ENCODE measurements at regions of chr11 and their contacts with region 1.

Region 1: GRCh38 chr11:121591405-121592033 is 138.8 kb upstream of the SORL1-AS1 start:
- DNase-seq: no peak
- ATAC-seq: peak; percentile 39
- H3K4me3 Mint-ChIP-seq: peak overlapping the region; percentile 49
- H3K27ac Mint-ChIP-seq: peak overlapping the region; percentile 93
- H3K4me1 Mint-ChIP-seq: peaks cover 36% of the 10 kb centered on the region
- H3K27me3 Mint-ChIP-seq: no peaks in the 10 kb centered on the region
- CTCF ChIP-seq: peak; percentile 77

Region 2: GRCh38 chr11:120929664-120930154 is 661.8 kb before region 1 on chr11:
- CTCF ChIA-PET with region 1: no interaction called
- POLR2A ChIA-PET with region 1: no interaction called
- intact Hi-C with region 1: loop called (anchors 10 kb)
- DNase-seq: no peak
- ATAC-seq: no peak
- H3K4me3 Mint-ChIP-seq: no peak overlapping the region
- H3K27ac Mint-ChIP-seq: no peak overlapping the region
- H3K4me1 Mint-ChIP-seq: peaks cover 16% of the 10 kb centered on the region
- H3K27me3 Mint-ChIP-seq: peaks cover 16% of the 10 kb centered on the region
- CTCF ChIP-seq: no peak

Region 3: GRCh38 chr11:121292495-121293287 is 298.8 kb before region 1 on chr11 and contains the start of gene SC5D:
- CTCF ChIA-PET with region 1: interaction called, 5 read pairs
- POLR2A ChIA-PET with region 1: interaction called, 9 read pairs
- intact Hi-C with region 1: loop called (anchors 1 kb)
- DNase-seq: peak; percentile 94
- ATAC-seq: peak; percentile 85
- H3K4me3 Mint-ChIP-seq: peak within 1 kb of the TSS; percentile 94
- H3K27ac Mint-ChIP-seq: peak within 1 kb of the TSS; percentile 97
- H3K4me1 Mint-ChIP-seq: peaks cover 50% of the 10 kb centered on the region
- H3K27me3 Mint-ChIP-seq: no peaks in the 10 kb centered on the region
- CTCF ChIP-seq: no peak
- total RNA-seq, gene SC5D: 35.2 and 40.4 TPM in 2 replicates

Region 4: GRCh38 chr11:121367001-121367843 is 224.3 kb before region 1 on chr11:
- CTCF ChIA-PET with region 1: interaction called, 3 read pairs
- POLR2A ChIA-PET with region 1: interaction called, 4 read pairs
- intact Hi-C with region 1: loop called (anchors 1 kb)
- DNase-seq: peak; percentile 22
- ATAC-seq: peak; percentile 98
- H3K4me3 Mint-ChIP-seq: peak overlapping the region; percentile 74
- H3K27ac Mint-ChIP-seq: peak overlapping the region; percentile 81
- H3K4me1 Mint-ChIP-seq: peaks cover 55% of the 10 kb centered on the region
- H3K27me3 Mint-ChIP-seq: no peaks in the 10 kb centered on the region
- CTCF ChIP-seq: no peak

Region 5: DNA sequence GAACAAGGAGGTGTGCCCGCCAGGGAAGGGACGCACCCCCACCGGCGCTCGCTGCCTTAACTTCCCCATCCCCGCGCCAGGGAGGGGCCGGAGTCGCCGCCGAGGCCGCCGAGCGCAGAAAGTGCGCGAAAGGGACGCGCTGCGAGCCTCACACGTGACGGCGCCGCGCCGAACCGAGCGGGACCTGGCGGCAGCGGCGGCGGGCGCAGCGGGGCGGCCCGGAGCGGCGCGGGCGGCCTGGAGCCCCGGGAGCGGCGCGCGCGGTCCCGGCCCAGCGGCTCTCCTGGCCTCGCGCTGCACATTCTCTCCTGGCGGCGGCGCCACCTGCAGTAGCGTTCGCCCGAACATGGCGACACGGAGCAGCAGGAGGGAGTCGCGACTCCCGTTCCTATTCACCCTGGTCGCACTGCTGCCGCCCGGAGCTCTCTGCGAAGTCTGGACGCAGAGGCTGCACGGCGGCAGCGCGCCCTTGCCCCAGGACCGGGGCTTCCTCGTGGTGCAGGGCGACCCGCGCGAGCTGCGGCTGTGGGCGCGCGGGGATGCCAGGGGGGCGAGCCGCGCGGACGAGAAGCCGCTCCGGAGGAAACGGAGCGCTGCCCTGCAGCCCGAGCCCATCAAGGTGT is 139.4 kb before region 1 on chr11 and contains the start of gene SORL1:
- CTCF ChIA-PET with region 1: interaction called, 12 read pairs
- POLR2A ChIA-PET with region 1: interaction called, 20 read pairs
- intact Hi-C with region 1: loop called (anchors 1 kb)
- DNase-seq: peak; percentile 57
- ATAC-seq: peak; percentile 62
- H3K4me3 Mint-ChIP-seq: peak within 1 kb of the TSS; percentile 92
- H3K27ac Mint-ChIP-seq: peak within 1 kb of the TSS; percentile 95
- H3K4me1 Mint-ChIP-seq: peaks cover 92% of the 10 kb centered on the region
- H3K27me3 Mint-ChIP-seq: no peaks in the 10 kb centered on the region
- CTCF ChIP-seq: no peak
- total RNA-seq, gene SORL1: 159 and 180 TPM in 2 replicates

Region 6: DNA sequence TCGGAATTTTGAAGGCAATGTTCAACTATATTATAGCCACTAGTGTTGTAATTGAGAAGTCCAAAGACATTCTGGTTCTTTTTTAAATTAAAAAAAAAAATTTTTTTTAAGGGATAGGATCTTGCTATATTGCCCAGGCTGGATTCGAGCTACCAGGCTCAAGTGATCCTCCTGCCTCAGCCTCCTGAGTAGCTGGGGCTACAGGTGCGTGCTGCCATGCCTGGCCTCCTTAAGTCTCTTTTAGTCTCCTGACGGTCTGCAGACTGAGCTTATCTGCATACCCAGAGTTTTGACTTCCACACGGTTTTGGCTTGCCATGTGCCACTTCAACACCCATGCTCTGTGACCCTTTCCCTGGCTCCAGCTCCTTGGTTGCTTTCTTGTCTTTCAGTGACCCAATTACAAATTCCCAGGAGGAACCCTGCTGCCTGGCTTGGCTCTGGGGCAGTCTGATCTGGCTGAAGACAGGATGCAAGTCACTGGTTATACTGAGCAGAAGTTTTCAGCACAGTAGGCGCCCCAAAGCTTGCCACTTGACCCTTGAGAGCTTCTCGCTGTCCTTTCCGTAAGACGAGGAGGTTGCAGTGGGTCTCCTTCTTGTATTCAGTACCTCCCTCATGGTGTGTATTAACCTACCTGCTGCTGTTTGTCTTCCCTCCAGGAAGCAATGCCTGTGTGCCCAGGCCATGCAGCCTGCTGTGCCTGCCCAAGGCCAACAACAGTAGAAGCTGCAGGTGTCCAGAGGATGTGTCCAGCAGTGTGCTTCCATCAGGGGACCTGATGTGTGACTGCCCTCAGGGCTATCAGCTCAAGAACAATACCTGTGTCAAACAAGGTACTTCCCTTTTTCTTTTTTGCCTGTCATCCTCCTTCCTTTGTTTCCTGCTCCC is 25.0 kb before region 1 on chr11:
- CTCF ChIA-PET with region 1: interaction called, 4 read pairs
- POLR2A ChIA-PET with region 1: interaction called, 3 read pairs
- intact Hi-C with region 1: loop called (anchors 1 kb)
- DNase-seq: no peak
- ATAC-seq: no peak
- H3K4me3 Mint-ChIP-seq: no peak overlapping the region
- H3K27ac Mint-ChIP-seq: no peak overlapping the region
- H3K4me1 Mint-ChIP-seq: peaks cover 33% of the 10 kb centered on the region
- H3K27me3 Mint-ChIP-seq: peaks cover 2% of the 10 kb centered on the region
- CTCF ChIP-seq: no peak

Measured in activated B cell treated with CpG ODN at 0.5 μM for 24 hours (primary cell).